ENCODE measurements at regions of chr11 and their contacts with region 1.

Region 1: DNA sequence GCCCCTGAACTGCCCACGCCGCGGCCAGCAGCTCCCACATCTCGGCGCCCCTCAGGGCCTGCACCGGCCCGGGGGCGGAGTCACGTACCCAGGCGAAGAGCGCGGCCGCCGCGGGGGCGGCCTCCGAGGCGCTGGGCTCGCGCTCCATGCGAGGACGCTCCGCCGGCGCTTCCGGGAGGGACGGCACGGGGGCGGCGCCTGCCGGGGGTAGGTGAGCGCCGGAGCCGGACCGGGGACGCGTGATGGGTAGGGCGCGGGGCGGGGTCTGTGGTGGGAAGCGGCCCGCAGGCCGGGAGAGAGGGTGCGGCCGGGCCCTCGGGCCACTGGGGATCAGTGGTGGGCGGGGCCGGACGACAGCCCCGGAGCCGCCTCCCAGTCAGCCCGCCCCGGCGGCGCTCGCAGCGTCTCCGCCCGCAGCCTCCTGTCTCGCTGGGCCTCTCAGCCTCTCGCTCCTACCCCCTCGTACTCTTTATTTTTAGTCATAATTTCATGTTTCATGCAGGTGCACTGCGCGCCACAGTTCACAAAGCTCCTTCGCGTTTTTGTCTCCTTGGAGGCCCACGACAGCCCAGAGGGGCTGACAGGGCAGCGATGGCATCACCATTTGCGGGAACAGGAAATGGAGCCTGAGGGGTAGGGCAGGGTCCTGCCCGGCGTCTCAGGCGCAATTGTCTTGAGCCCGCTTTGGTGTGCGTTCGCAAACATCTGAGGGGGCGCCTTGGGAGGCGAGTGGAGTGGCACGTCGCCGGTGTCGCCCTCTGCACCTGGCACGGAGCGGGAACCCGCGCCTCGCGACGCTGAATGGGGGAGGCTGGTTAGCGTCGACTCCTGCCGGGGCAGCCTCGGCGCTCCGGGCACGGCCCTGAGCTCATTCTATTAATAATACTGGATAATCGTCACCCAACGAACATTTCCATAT is at the start of gene SERGEF:
- DNase-seq: peak; percentile 94
- H3K4me3 Mint-ChIP-seq: peak within 1 kb of the TSS; percentile 97
- H3K27ac Mint-ChIP-seq: peak within 1 kb of the TSS; percentile 95
- H3K4me1 Mint-ChIP-seq: peaks cover 39% of the 10 kb centered on the region
- H3K27me3 Mint-ChIP-seq: no peaks in the 10 kb centered on the region
- total RNA-seq, gene SERGEF: 40.2 to 41.7 TPM

Region 2: GRCh38 chr11:16738193-16738946 is 1274.8 kb before region 1 on chr11 and contains the start of gene C11orf58:
- CTCF ChIA-PET with region 1: no interaction called
- intact Hi-C with region 1: loop called (anchors 5 kb)
- DNase-seq: peak; percentile 97
- H3K4me3 Mint-ChIP-seq: peak within 1 kb of the TSS; percentile 73
- H3K27ac Mint-ChIP-seq: peak within 1 kb of the TSS; percentile 85
- H3K4me1 Mint-ChIP-seq: peaks cover 22% of the 10 kb centered on the region
- H3K27me3 Mint-ChIP-seq: no peaks in the 10 kb centered on the region
- total RNA-seq, gene C11orf58: 114 to 123 TPM

Region 3: GRCh38 chr11:17207317-17208258 is 805.5 kb before region 1 on chr11 and contains the start of gene PIK3C2A:
- CTCF ChIA-PET with region 1: no interaction called
- intact Hi-C with region 1: loop called (anchors 1 kb)
- DNase-seq: peak; percentile 97
- H3K4me3 Mint-ChIP-seq: peak within 1 kb of the TSS; percentile 99
- H3K27ac Mint-ChIP-seq: peak within 1 kb of the TSS; percentile 92
- H3K4me1 Mint-ChIP-seq: peaks cover 30% of the 10 kb centered on the region
- H3K27me3 Mint-ChIP-seq: no peaks in the 10 kb centered on the region
- total RNA-seq, gene PIK3C2A: 16.4 to 17.3 TPM

Region 4: GRCh38 chr11:18105802-18106574 is 92.9 kb after region 1 on chr11 and contains the start of gene SAAL1:
- CTCF ChIA-PET with region 1: interaction called, 10 read pairs
- intact Hi-C with region 1: loop called (anchors 1 kb)
- DNase-seq: peak; percentile 93
- H3K4me3 Mint-ChIP-seq: peak within 1 kb of the TSS; percentile 90
- H3K27ac Mint-ChIP-seq: peak within 1 kb of the TSS; percentile 83
- H3K4me1 Mint-ChIP-seq: peaks cover 34% of the 10 kb centered on the region
- H3K27me3 Mint-ChIP-seq: no peaks in the 10 kb centered on the region
- total RNA-seq, gene SAAL1: 36.4 to 37.0 TPM

Region 5: GRCh38 chr11:18395735-18396504 is 382.8 kb after region 1 on chr11:
- CTCF ChIA-PET with region 1: no interaction called
- intact Hi-C with region 1: loop called (anchors 1 kb)
- DNase-seq: peak; percentile 96
- H3K4me3 Mint-ChIP-seq: peak overlapping the region; percentile 97
- H3K27ac Mint-ChIP-seq: peak overlapping the region; percentile 99
- H3K4me1 Mint-ChIP-seq: peaks cover 62% of the 10 kb centered on the region
- H3K27me3 Mint-ChIP-seq: no peaks in the 10 kb centered on the region

Region 6: DNA sequence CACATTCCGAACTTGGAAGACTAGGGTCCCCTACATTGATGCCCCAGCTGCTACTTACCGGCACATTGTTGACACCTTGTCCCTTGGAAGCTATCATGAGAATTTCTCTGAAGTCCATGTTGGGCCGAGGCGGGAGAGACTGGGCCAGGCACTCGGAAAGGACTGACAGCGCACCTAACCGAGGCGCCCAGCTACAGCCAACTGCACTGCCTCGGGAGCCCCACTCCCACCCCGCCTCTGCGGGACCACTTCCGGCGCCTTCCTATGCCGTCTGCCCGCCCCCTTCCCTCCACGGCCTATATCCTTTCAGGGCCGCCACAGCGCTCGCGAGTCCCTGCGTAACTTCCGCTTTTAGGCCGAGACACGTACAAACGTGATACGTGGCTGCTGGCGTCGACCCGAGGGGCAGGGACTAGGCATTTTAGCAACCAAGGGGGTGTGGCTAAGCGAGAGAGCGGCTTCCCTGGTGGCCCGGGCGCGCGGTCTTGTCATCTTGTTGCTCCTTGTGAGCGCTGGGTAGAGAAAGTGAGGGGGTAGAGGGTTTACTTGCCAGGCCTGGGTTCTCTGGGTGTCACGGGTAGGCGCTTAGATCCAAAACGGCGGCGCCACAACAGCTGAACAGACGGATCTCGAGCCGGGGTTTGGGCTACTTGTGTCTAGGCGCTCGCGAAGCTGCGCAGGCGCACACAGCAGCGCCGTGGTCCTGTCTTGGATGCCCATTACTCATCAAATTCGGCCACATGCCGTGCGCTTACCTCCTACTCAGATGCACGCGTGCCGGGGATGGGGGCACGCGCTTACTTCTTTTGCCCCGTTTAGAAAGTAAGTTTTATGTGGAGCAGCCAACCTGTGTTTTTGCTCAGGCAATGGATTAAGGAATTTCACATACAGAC is 621.3 kb after region 1 on chr11 and contains the start of gene SPTY2D1:
- CTCF ChIA-PET with region 1: no interaction called
- intact Hi-C with region 1: loop called (anchors 1 kb)
- DNase-seq: peak; percentile 99
- H3K4me3 Mint-ChIP-seq: peak within 1 kb of the TSS; percentile 87
- H3K27ac Mint-ChIP-seq: peak within 1 kb of the TSS; percentile 96
- H3K4me1 Mint-ChIP-seq: peaks cover 30% of the 10 kb centered on the region
- H3K27me3 Mint-ChIP-seq: no peaks in the 10 kb centered on the region
- total RNA-seq, gene SPTY2D1: 13.9 to 15.0 TPM

Region 7: GRCh38 chr11:19116971-19117750 is 1104.0 kb after region 1 on chr11 and contains the start of gene ZDHHC13:
- CTCF ChIA-PET with region 1: no interaction called
- intact Hi-C with region 1: loop called (anchors 5 kb)
- DNase-seq: peak; percentile 98
- H3K4me3 Mint-ChIP-seq: peak within 1 kb of the TSS; percentile 89
- H3K27ac Mint-ChIP-seq: peak within 1 kb of the TSS; percentile 79
- H3K4me1 Mint-ChIP-seq: peaks cover 49% of the 10 kb centered on the region
- H3K27me3 Mint-ChIP-seq: no peaks in the 10 kb centered on the region
- total RNA-seq, gene ZDHHC13: 20.9 to 25.1 TPM